PC-3 (cell line): ENCODE measurements at regions of chr18 and their contacts with region 1.

Region 1: DNA sequence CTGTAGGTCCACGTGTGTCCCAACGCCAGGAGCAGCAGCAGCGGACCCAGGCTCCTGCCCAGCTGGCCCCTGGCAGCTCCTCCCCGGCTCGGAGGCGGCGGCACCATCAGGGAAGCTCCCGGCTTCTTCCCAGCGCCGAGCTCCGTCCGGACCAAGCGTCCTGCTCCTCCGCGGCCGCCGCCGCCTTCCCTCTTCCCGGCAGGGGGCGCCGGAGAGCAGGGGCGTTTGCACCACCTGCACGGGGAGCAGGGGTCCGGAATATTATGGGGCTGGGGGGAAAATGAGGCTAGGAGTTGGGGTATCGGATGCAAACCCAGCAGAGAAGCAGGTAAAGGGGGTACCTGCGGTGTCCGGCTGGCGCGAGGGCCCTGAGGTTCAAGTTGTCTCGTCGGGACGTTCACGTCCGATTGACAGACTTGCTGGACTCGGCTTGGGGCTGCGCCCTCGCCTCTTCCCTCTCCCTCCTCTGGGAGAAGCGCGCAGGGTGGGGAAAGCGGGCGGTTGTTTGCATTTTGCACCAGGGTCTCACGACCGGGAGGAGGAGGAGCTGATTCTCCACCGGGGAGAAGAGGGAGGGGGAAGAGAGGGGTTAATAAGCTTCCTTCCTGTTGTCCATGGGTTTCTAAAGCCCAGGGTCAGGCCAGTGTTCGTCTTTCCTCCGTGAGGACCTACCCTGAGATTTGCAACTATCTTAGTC is at the start of gene CCBE1:
- DNase-seq: peak; percentile 84
- ATAC-seq: peak; percentile 66
- H3K4me3 ChIP-seq: peak within 1 kb of the TSS; percentile 86
- H3K27ac ChIP-seq: peak within 1 kb of the TSS; percentile 35
- H3K4me1 ChIP-seq: peaks cover 43% of the 10 kb centered on the region
- H3K27me3 ChIP-seq: no peaks in the 10 kb centered on the region
- CTCF ChIP-seq: peak; percentile 93
- total RNA-seq, gene CCBE1: 13.9 and 20.8 TPM in 2 replicates

Region 2: GRCh38 chr18:59631583-59632181 is 65.7 kb before region 1 on chr18:
- CTCF ChIA-PET with region 1: interaction called, 19 read pairs
- POLR2A ChIA-PET with region 1: no interaction called
- intact Hi-C with region 1: loop called (anchors 1 kb)
- DNase-seq: peak; percentile 59
- ATAC-seq: peak; percentile 54; the same call in 1 of the 2 replicates
- H3K4me3 ChIP-seq: no peak overlapping the region
- H3K27ac ChIP-seq: no peak overlapping the region
- H3K4me1 ChIP-seq: no peaks in the 10 kb centered on the region
- H3K27me3 ChIP-seq: no peaks in the 10 kb centered on the region
- CTCF ChIP-seq: peak; percentile 97

Region 3: DNA sequence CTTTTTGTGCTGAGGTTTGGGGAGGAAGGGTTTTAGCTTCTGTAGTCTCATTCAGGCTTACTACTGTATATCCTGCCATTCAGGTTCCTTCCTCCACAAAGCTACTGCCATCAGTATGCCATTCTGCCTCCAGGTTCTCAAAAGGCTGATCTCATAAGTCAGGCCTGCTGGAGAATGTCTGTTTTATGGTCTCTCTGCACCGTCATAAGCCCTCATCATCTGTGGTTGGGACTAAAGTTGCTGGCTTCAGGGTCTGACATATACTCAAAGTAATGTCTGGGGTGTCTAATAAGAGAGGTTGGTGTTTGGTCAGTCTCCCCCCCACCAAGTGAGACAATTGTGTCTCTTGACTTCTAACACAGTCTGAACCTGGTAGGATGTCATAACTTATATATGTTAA is 36.0 kb after region 1 on chr18:
- CTCF ChIA-PET with region 1: no interaction called
- POLR2A ChIA-PET with region 1: interaction called, 5 read pairs
- intact Hi-C with region 1: loop called (anchors 5 kb)
- DNase-seq: no peak
- ATAC-seq: no peak
- H3K4me3 ChIP-seq: no peak overlapping the region
- H3K27ac ChIP-seq: no peak overlapping the region
- H3K4me1 ChIP-seq: peaks cover 29% of the 10 kb centered on the region
- H3K27me3 ChIP-seq: no peaks in the 10 kb centered on the region
- CTCF ChIP-seq: no peak

Region 4: GRCh38 chr18:59823596-59824195 is 126.3 kb after region 1 on chr18:
- CTCF ChIA-PET with region 1: interaction called, 47 read pairs
- POLR2A ChIA-PET with region 1: no interaction called
- intact Hi-C with region 1: loop called (anchors 2 kb)
- DNase-seq: peak; percentile 92
- ATAC-seq: peak; percentile 92
- H3K4me3 ChIP-seq: no peak overlapping the region
- H3K27ac ChIP-seq: no peak overlapping the region
- H3K4me1 ChIP-seq: peaks cover 4% of the 10 kb centered on the region
- H3K27me3 ChIP-seq: no peaks in the 10 kb centered on the region
- CTCF ChIP-seq: peak; percentile 92

Region 5: DNA sequence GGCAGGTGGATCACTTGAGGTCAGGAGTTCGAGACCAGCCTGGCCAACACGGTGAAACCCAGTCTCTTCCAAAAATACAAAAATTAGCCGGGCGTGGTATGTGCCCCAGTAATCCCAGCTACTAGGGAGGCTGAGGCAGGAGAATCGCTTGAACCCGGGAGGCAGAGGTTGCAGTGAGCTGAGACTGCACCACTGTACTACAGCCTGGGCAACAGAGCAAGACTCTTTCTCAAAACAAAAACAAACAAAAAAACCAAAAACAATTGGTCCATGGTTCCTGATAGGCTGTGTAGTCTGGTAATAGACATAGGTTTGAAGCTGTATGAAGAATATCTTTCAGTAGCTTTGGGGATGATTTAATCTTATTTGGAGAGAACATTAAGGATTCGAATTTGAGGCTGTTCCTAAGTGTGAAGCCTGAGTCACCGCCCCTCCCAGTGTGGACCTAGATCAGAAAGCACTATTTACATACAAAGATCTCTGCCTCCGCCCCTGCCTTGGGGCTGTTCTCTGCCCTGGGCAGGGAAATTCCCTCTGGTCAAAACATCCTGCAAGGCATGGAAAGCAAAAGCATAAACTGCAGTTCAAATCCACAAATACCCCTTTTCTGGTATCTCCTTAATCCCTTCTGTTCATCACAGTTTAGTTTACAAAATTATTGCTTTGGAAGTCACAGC is 149.6 kb after region 1 on chr18:
- CTCF ChIA-PET with region 1: no interaction called
- POLR2A ChIA-PET with region 1: no interaction called
- intact Hi-C with region 1: no loop called
- DNase-seq: peak; percentile 61
- ATAC-seq: peak; percentile 86
- H3K4me3 ChIP-seq: no peak overlapping the region
- H3K27ac ChIP-seq: no peak overlapping the region
- H3K4me1 ChIP-seq: peaks cover 29% of the 10 kb centered on the region
- H3K27me3 ChIP-seq: no peaks in the 10 kb centered on the region
- CTCF ChIP-seq: no peak